Caco-2 (cell line): ENCODE measurements at regions of chr2 and their contacts with region 1.

Region 1: DNA sequence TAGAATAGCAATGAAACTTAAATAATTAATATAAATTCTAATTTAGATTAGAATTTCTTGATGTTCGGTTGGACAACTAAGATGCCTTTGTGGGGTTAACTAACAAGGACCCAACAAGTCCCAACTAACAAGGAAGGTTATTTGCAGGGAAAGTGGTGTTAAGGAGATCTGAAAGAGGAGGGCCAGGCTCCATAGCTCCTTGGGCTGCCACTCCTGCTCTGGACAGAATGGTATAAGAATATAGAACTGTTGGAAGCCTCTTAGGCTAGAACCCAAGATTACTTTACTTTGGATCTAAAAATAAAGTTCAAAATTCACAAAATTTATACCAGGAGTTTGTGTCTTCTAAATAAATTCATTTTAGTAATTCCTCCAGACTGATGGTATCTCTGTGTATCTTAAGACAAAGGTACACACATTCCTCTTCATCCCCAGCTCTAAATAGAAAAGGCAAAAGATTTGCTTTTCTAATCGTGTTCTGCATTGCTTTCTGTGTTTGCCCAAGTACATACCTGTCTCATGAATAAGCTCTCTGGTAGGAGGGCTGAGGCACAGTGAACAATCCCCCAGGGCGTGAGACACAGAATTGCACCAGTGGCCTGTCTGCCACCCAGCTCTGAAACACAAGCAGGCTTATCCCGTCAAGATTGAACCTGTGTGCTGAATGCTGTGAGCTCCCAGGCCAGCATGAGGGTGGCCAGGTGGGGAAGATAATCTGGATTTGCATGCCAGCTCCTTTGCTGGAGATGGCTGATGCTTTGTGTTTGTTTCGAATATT is 176.0 kb downstream of the ACKR3 start:
- DNase-seq: peak; percentile 78 to 85
- H3K4me3 ChIP-seq: no peak overlapping the region
- H3K4me3 Mint-ChIP-seq: peak overlapping the region; percentile 15
- H3K27ac Mint-ChIP-seq: peak overlapping the region; percentile 88
- H3K4me1 ChIP-seq: peaks cover 23% of the 10 kb centered on the region
- H3K4me1 Mint-ChIP-seq: peaks cover 19% of the 10 kb centered on the region
- H3K27me3 ChIP-seq: no peaks in the 10 kb centered on the region
- H3K27me3 Mint-ChIP-seq: no peaks in the 10 kb centered on the region
- CTCF ChIP-seq: no peak

Region 2: DNA sequence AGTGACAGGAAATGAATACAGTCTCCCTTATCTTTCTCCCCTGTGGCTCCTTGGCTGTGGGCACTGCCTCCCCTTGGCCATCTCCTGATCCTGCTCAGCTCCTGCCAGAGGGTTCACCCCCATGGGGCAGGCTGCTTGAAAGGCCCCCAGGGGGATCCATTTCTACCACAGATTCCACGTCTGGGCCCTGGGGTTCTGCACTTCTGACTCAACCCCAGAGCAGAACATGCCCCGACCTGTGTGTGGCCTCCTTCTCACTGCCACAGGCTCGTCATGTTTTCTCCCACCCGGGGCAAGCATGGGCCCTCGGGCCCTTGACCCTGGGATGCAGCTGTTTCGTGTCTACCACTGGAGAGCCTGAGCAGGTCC is 53.8 kb before region 1 on chr2:
- CTCF ChIA-PET with region 1: no interaction called
- POLR2A ChIA-PET with region 1: no interaction called
- intact Hi-C with region 1: loop called (anchors 1 kb)
- DNase-seq: peak in 1 of 2 experiments; percentile 47
- H3K4me3 ChIP-seq: no peak overlapping the region
- H3K4me3 Mint-ChIP-seq: no peak overlapping the region
- H3K27ac Mint-ChIP-seq: peak overlapping the region; percentile 48
- H3K4me1 ChIP-seq: peaks cover 18% of the 10 kb centered on the region
- H3K4me1 Mint-ChIP-seq: peaks cover 13% of the 10 kb centered on the region
- H3K27me3 ChIP-seq: no peaks in the 10 kb centered on the region
- H3K27me3 Mint-ChIP-seq: no peaks in the 10 kb centered on the region
- CTCF ChIP-seq: no peak

Region 3: DNA sequence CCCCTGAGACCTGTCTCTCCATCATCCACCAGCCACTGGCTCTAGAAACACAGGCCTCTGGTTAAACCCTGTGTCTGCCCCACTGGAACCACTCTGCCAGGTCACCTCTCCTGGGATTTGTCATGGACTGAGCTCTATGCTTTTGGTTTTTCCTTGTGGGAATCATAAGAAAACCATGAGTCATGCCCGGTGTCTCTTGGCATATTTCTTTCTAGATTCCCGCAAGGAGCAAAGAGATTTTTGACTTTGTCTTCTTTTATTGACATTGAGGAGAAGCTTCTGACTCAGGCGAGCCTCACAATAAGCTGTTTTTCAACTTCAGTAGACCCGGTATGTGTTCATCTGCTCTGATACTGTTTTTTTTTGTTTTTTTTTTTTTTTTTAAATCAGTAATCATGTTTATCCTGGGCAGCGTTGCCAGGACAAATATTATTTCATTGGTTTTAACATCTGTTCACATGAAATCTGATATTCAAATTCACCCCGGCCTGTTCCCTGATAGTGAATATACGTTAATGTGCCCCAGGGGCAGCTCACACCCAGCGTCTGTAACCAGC is 31.2 kb after region 1 on chr2:
- CTCF ChIA-PET with region 1: no interaction called
- POLR2A ChIA-PET with region 1: no interaction called
- intact Hi-C with region 1: no loop called
- DNase-seq: no peak
- H3K4me3 ChIP-seq: no peak overlapping the region
- H3K4me3 Mint-ChIP-seq: no peak overlapping the region
- H3K27ac Mint-ChIP-seq: no peak overlapping the region
- H3K4me1 ChIP-seq: no peaks in the 10 kb centered on the region
- H3K4me1 Mint-ChIP-seq: no peaks in the 10 kb centered on the region
- H3K27me3 ChIP-seq: no peaks in the 10 kb centered on the region
- H3K27me3 Mint-ChIP-seq: no peaks in the 10 kb centered on the region
- CTCF ChIP-seq: no peak